Left ventricle myocardium superior (tissue), 1 donor: ENCODE measurements at regions of chr20 and their contacts with region 1.

Region 1: DNA sequence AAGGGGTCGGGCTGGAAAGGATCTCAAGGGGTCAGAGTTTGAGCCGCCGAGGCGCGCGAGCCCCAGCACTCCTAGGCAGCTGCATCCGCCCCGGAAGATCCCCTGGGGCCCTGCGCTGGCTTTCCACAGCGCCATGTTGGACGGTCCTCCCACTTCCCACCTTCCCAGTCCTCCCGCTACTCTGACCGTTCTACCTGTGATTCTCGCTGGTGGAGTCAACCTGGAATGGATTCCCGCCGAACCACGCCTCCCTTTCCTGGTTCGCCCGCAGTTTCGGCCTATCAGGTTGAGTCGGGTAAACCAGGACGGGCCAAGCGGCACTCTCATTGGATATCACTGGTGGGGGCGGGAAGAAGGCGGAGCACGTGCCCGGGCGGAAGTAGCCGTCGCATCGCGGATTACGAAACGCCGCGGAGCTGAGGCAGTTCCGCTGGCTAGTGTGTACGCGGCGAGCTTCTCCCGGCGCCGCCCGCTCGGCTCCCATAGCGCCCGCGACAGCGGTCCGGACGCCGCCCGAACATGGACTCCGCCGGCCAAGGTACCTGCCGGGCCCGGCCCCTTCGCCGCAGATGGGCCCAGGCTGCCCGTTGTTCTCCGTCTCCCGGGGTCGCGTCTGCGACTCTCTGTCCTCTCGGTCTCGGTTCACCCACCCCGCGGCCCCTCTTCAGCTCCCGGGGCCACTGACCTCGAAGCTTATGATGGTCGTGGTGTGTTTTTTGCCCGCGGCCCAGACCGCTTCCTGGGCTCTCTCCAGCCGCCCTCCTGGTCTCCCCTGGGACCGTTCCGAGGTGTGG is at the start of gene TPD52L2:
- DNase-seq: peak; percentile 98
- ATAC-seq: peak; percentile 95
- total RNA-seq, gene TPD52L2: 78.0 TPM

Region 2: GRCh38 chr20:63782051-63782471 is 83.0 kb before region 1 on chr20:
- intact Hi-C with region 1: loop called (anchors 10 kb)
- DNase-seq: no peak
- ATAC-seq: no peak